Ascending aorta (tissue), 2 donors: ENCODE measurements at regions of chr20 and their contacts with region 1.

Region 1: DNA sequence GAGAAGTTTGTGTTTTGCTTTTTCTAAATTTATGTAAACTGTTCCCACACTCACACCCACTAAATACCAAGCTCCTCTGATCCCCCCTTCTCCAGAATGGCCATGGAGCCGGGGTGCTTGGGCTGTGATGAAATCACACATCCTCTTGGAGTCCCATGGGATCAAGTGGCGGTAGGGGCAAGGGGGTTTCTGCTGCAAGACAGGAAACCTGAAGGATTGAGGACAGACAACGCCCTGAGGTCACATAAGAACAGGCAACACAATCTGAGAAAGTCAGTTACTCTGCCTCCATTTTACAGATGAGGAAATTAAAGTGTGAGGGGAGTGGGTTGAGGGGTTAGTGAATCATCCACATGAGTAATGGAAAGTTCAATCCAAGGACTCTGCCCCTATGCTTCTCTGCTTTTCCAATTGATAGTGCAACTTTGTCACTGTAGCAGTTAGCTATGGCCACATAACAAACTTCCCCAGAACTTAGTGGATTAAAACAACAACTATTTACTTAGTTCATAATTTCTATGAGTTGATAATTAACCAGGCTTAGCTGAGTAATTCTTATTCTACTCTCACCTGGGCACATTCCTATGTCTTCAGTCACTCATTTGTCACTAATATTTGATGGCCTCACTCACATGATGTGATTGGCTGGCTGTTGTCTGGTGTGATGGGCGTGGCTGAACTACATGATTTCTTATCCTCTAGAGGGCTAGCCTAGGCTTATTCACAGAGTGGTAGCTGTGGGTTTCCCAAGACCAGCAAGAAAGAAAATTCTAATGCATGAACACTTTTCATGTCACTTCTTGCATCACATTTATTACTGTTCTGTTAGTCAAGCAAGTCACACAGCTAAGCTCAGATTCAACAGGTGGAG is 311.1 kb upstream of the RNF24 start:
- DNase-seq: no peak
- H3K4me3 ChIP-seq: no peak overlapping the region
- H3K27ac ChIP-seq: peak overlapping the region; percentile 69 to 70
- H3K4me1 ChIP-seq: peaks cover 0 to 23% of the 10 kb centered on the region in 2 donors
- H3K27me3 ChIP-seq: no peaks in the 10 kb centered on the region
- CTCF ChIP-seq: no peak

Region 2: GRCh38 chr20:4227085-4227821 is 99.2 kb before region 1 on chr20:
- intact Hi-C with region 1: loop called (anchors 5 kb)
- DNase-seq: no peak
- H3K4me3 ChIP-seq: no peak overlapping the region
- H3K27ac ChIP-seq: peak overlapping the region; percentile 82 to 89
- H3K4me1 ChIP-seq: peaks cover 0 to 39% of the 10 kb centered on the region in 2 donors
- H3K27me3 ChIP-seq: no peaks in the 10 kb centered on the region
- CTCF ChIP-seq: peak in 2 of 3 experiments; percentile 35 to 43

Region 3: DNA sequence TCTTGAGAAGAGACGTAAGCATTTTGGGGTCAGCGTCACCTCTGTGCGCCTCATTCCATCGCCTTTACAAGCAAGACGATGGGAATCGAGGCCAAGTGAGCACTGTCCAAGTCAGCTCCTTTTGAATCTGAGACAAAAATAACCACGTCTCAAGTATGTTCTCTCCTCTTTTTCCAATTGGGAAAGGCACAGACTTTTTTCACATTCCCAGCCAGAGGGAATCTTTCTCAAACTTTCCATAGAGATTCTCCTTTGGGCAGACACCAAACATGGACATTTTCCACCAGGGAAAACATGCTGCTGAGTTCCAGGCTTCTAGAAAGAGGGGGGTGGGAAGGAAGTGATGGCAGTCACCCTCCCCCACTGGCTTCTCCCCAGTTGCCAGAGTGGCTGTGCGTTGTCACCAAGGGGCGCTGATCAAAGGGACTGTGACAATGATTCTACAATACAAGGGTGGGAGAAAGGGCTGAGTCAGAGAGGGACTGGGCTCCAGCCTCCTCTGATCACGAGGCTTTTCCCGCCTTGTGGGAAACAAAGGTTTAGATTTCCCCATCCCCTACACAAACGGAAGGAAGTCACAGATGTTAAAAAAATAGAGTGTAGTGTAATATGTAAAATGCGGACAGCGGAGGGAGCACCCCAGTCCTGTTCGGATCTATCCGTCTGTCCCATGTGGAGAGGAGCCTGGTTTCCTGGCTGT is 29.2 kb before region 1 on chr20:
- intact Hi-C with region 1: loop called (anchors 1 kb)
- DNase-seq: peak in 1 of 2 donors; percentile 90
- H3K4me3 ChIP-seq: no peak overlapping the region
- H3K27ac ChIP-seq: peak overlapping the region; percentile 64 to 82
- H3K4me1 ChIP-seq: peaks cover 0 to 8% of the 10 kb centered on the region in 2 donors
- H3K27me3 ChIP-seq: no peaks in the 10 kb centered on the region
- CTCF ChIP-seq: no peak

Region 4: DNA sequence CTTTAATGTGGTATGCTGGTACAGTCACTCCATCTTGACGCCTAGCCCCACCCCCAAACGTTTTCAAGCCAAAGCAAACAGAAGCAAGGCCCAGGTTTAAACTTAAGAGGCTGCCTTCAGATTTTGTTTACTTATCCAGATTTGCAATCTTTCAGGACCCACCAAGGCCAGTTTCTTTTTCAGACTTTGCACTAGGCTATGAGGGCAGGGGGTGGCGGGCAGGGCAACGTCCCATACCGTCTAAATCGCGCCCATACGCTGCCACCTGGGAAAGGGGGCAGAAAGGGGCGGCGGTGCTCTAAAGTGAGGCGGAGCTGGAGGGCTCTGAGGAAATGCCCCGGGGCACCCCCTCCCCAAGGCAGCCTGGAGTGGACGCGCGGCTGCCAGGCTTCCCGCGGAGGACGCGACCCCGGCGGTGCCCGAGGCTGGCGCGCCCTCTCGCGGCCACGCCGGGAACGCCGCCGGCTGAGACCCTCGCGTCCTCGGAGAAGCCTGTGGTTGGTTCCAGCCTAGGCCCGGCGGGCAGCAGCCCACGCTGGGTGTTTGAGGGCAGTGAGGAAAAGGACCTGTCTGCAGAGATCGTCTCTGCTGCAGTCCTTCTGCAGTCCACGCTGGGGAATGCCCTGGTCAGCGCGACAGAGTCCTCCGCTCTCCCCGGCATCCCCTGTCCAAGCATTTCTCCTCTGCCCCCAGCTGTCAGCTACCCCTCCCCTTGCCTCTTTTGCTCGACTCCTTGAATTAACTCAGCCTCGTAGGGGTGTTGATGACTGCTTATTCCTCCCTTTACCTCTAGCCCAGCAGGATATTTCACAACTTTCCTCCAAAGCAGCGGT is 266.1 kb after region 1 on chr20:
- intact Hi-C with region 1: loop called (anchors 5 kb)
- DNase-seq: peak in 1 of 2 donors; percentile 72
- H3K4me3 ChIP-seq: peak overlapping the region; percentile 49 to 53
- H3K27ac ChIP-seq: peak overlapping the region in 1 of 2 donors; percentile 69
- H3K4me1 ChIP-seq: peaks cover 6 to 10% of the 10 kb centered on the region in 2 donors
- H3K27me3 ChIP-seq: no peaks in the 10 kb centered on the region
- CTCF ChIP-seq: peak; percentile 90 to 93 (median 92)